ENCODE measurements at regions of chr6 and their contacts with region 1.

Region 1: GRCh38 chr6:136289579-136290409 is at the start of gene BCLAF1:
- DNase-seq: peak; percentile 99 to 100
- H3K4me3 ChIP-seq: peak within 1 kb of the TSS; percentile 76 to 83
- H3K27ac ChIP-seq: peak within 1 kb of the TSS; percentile 98 to 99
- H3K4me1 ChIP-seq: peaks cover 13 to 22% of the 10 kb centered on the region in 2 donors
- H3K27me3 ChIP-seq: no peaks in the 10 kb centered on the region
- CTCF ChIP-seq: no peak
- total RNA-seq, gene BCLAF1: 42.6 TPM

Region 2: GRCh38 chr6:135497412-135498269 is 792.2 kb before region 1 on chr6 and contains the start of gene AHI1:
- intact Hi-C with region 1: loop called (anchors 2 kb)
- DNase-seq: peak; percentile 73 to 97
- H3K4me3 ChIP-seq: peak within 1 kb of the TSS; percentile 93 to 96
- H3K27ac ChIP-seq: peak within 1 kb of the TSS; percentile 97 to 98
- H3K4me1 ChIP-seq: peaks cover 0 to 2% of the 10 kb centered on the region in 2 donors
- H3K27me3 ChIP-seq: no peaks in the 10 kb centered on the region
- CTCF ChIP-seq: peak in 2 of 3 experiments; percentile 4 to 25
- total RNA-seq, gene AHI1: 5.4 TPM

Region 3: GRCh38 chr6:136213012-136213539 is 76.7 kb before region 1 on chr6:
- intact Hi-C with region 1: no loop called
- DNase-seq: no peak
- H3K4me3 ChIP-seq: no peak overlapping the region
- H3K27ac ChIP-seq: no peak overlapping the region
- H3K4me1 ChIP-seq: no peaks in the 10 kb centered on the region
- H3K27me3 ChIP-seq: no peaks in the 10 kb centered on the region
- CTCF ChIP-seq: no peak

Region 4: DNA sequence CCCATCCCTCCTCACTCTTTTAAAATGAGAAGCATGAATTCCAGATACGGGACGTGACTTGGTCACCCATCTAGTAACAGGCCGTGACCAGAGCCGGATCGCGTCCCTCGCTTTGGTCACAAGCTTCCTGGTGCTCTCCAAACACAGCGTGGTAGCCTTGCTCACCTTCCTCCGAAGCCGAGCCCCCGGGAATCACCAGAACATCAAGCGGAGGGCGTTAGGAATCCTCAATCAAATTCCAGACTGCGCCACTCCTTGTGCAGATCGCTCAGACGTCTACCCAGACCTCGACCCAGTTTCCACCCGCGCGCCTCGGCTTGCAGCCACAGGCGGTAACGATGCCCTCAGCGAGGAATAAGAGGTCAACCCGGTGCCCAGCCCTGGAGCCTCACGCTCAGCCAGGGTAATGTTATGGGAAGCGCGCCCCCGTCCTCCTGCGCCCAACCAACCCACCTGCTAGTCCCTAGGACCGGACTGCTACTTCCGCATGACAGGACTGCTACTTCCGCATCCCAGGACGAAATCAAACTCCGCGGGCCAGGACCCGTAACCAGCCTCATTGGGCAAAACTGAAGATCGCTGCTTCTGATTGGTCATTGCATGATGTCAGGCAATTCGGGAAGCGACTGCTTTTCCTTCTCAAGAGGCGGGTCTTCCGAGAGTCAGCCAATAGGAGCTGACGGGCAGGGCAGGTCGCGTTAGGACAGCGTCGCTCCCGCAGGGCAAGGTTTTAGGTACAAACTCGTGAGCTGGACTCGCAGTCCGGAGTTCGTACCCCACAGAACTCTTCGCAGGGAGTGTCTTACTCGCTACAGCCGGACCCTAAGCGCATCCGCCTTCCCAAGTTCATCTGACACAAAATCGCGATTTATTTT is 39.7 kb before region 1 on chr6 and contains the start of gene MTFR2:
- intact Hi-C with region 1: loop called (anchors 1 kb)
- DNase-seq: peak; percentile 95 to 98
- H3K4me3 ChIP-seq: peak within 1 kb of the TSS; percentile 84 to 88
- H3K27ac ChIP-seq: no peak within 1 kb of the TSS
- H3K4me1 ChIP-seq: peaks cover 5 to 11% of the 10 kb centered on the region in 2 donors
- H3K27me3 ChIP-seq: no peaks in the 10 kb centered on the region
- CTCF ChIP-seq: no peak
- total RNA-seq, gene MTFR2: not detected

Region 5: DNA sequence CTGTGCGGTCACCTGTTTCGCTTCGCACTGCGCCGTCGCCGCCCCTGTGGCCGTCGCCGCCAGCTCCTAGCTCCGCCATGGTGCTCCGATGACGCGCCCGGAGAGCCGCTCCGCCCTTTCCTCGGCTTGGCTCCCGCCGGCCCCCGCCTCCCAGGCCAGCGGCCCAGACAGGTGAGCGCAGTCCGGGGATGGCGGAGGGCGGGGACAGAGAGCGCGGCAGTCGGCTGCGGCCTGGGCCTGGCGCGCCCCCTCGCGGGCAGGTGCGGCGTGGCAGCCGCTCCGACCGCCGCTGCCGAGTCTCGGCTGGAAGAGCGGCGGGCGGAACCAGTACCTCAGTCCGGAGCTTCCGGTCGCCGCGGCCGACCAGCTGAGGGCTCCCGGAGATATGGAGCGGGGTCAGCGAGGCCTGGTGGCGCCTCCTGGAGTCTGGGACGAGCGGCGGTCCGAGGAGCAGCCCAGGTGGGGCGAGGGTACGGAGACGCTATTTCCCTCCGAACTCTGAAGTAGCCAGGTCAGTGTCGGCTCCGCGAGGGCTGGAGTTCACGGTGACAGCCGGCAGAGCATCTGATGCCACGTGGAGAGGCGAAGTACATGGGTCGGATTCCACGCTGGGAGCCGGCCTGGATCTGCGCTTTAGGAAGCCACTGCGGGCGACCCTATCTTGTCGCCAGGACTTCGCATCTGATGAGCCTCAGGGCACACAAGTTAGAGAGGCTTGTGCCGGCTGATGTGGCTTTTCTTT is 260.7 kb after region 1 on chr6 and contains the start of gene MAP7:
- intact Hi-C with region 1: loop called (anchors 1 kb)
- DNase-seq: peak in 1 of 2 donors; percentile 75
- H3K4me3 ChIP-seq: peak within 1 kb of the TSS; percentile 97 to 98
- H3K27ac ChIP-seq: no peak within 1 kb of the TSS
- H3K4me1 ChIP-seq: peaks cover 4 to 8% of the 10 kb centered on the region in 2 donors
- H3K27me3 ChIP-seq: no peaks in the 10 kb centered on the region
- CTCF ChIP-seq: peak; percentile 65 to 84 (median 83)
- total RNA-seq, gene MAP7: not detected

Region 6: GRCh38 chr6:136822376-136823127 is 532.8 kb after region 1 on chr6 and contains the start of gene PEX7:
- intact Hi-C with region 1: loop called (anchors 5 kb)
- DNase-seq: peak; percentile 47 to 93
- H3K4me3 ChIP-seq: peak within 1 kb of the TSS; percentile 73 to 95
- H3K27ac ChIP-seq: peak within 1 kb of the TSS; percentile 88 to 97
- H3K4me1 ChIP-seq: no peaks in the 10 kb centered on the region
- H3K27me3 ChIP-seq: no peaks in the 10 kb centered on the region
- CTCF ChIP-seq: peak; percentile 42 to 57 (median 56)
- total RNA-seq, gene PEX7: 10.5 TPM

Region 7: DNA sequence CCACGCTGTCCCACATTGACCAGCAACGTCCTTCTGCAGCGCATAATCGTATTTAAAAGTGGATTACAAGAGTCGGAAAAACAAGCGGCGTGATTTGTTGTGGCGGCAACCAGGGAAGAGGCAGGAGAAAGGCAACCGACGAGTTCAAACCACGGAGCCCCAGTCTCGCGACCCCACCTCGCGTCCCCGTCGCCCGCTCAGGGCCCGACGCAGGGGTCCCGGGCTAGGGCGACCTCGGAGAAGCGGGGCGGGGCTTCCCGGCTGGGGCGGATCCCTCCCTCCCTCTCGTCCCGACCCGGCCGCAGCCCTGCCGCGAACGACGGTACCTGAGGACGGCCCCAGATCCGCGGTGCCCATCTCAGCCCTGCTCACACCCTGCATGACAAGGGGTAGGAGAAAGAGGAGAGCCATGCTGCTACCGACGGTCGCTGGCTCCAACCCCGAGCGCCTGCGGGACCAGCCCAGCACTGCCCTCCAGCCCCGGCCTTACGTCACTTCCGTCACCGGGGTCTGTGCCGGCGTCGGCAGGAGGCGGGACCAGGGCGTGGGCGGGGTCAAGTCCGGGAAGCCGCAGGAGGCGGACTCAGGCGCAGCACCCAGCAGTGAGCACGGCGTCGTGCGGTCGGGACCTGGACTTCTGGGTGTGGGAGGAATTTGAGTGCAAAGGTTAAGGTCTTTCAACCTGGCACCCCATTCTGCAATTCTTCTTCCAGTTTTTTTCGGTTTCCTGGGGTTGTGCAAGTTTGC is 929.3 kb after region 1 on chr6 and contains the start of gene IFNGR1:
- intact Hi-C with region 1: loop called (anchors 10 kb)
- DNase-seq: peak; percentile 82 to 98
- H3K4me3 ChIP-seq: peak within 1 kb of the TSS; percentile 87 to 93
- H3K27ac ChIP-seq: peak within 1 kb of the TSS; percentile 99
- H3K4me1 ChIP-seq: peaks cover 6 to 46% of the 10 kb centered on the region in 2 donors
- H3K27me3 ChIP-seq: no peaks in the 10 kb centered on the region
- CTCF ChIP-seq: peak in 1 of 3 experiments; percentile 2
- total RNA-seq, gene IFNGR1: 47.7 TPM

Measured in ascending aorta (tissue), 2 donors.